Left ventricle myocardium inferior (tissue), 1 donor: ENCODE measurements at regions of chr15 and their contacts with region 1.

Region 1: DNA sequence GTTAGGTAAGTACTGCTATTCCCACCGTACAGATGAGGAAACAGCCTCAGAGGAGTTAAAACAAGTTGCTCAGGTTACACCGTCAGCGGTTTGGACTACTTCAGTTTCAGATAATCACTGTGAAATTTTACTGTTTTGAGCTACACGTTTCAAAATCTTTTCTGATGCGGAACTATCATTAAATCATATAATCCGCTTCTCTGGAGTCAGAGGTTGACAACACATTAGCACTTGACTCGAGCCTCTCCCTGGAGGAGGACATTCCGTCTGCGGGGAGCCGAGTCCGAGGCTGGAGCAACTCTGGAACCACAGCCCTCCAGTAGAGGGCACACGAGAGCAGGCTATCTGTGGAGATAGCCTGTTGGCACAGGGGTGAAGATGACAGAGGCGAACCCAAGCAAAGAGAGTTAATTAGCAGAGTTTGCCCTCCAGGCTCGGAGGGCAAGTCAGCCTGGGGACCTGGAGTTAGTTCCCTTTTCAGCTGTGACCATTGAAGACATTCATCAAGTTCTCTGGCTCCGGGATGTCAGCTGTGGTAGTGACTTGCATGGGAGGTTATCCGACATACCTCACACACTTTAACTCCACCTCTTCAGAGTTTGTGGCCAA is 131.2 kb downstream of the IGF1R start:
- DNase-seq: peak; percentile 75
- H3K4me3 ChIP-seq: peak overlapping the region; percentile 4
- H3K27ac ChIP-seq: peak overlapping the region; percentile 61
- H3K4me1 ChIP-seq: peaks cover 62% of the 10 kb centered on the region
- H3K27me3 ChIP-seq: no peaks in the 10 kb centered on the region
- CTCF ChIP-seq: peak; percentile 95

Region 2: DNA sequence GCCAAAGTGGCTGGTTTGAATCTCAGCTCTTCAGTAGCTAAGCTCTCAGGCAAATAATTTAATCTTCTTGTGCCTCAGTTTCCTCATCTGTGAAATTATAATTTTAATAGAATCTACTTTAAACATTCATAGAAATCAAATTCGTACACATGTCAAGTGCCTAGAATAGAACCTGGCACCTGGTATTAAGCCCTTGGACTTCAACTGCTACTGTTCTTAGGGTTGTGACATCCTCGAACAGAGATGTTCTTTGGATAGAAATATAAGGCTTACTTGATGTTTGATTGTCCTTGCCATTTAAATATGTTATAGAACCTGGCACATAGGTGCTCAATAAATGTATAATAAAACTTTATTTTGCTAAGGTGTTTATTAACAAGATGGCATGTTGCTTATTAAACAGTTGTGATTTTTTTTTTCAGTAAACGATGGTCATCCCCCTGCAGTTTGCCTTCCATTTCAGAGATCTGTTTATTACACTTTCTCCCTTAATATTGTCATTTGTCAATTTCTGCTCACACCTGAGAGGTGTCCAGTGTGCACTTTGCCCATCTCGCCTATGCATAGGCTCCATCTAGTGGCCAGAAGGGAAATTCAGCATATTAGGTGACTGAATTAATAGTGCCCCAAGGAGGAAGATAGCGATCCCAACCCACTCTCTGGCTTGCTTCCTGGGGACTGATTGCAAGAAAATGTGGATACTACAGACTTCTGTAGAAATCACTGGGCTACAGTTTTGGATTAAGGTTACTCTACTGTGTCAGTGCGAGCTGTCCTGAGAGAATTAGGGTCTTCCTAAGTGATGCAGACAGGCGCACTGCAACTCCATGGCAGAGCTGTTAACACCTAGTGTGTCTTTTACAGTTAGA is 120.5 kb before region 1 on chr15:
- intact Hi-C with region 1: loop called (anchors 10 kb)
- DNase-seq: no peak
- H3K4me3 ChIP-seq: no peak overlapping the region
- H3K27ac ChIP-seq: no peak overlapping the region
- H3K4me1 ChIP-seq: peaks cover 99% of the 10 kb centered on the region
- H3K27me3 ChIP-seq: no peaks in the 10 kb centered on the region
- CTCF ChIP-seq: peak; percentile 88

Region 3: GRCh38 chr15:98845107-98845884 is 65.7 kb after region 1 on chr15:
- intact Hi-C with region 1: loop called (anchors 10 kb)
- DNase-seq: no peak
- H3K4me3 ChIP-seq: no peak overlapping the region
- H3K27ac ChIP-seq: no peak overlapping the region
- H3K4me1 ChIP-seq: peaks cover 77% of the 10 kb centered on the region
- H3K27me3 ChIP-seq: no peaks in the 10 kb centered on the region
- CTCF ChIP-seq: no peak

Region 4: GRCh38 chr15:99068186-99068585 is 288.6 kb after region 1 on chr15:
- intact Hi-C with region 1: loop called (anchors 10 kb)
- DNase-seq: no peak
- H3K4me3 ChIP-seq: no peak overlapping the region
- H3K27ac ChIP-seq: no peak overlapping the region
- H3K4me1 ChIP-seq: no peaks in the 10 kb centered on the region
- H3K27me3 ChIP-seq: no peaks in the 10 kb centered on the region
- CTCF ChIP-seq: no peak